Posterior cingulate gyrus (tissue), 11 donors: ENCODE measurements at regions of chr19 and their contacts with region 1.

Region 1: DNA sequence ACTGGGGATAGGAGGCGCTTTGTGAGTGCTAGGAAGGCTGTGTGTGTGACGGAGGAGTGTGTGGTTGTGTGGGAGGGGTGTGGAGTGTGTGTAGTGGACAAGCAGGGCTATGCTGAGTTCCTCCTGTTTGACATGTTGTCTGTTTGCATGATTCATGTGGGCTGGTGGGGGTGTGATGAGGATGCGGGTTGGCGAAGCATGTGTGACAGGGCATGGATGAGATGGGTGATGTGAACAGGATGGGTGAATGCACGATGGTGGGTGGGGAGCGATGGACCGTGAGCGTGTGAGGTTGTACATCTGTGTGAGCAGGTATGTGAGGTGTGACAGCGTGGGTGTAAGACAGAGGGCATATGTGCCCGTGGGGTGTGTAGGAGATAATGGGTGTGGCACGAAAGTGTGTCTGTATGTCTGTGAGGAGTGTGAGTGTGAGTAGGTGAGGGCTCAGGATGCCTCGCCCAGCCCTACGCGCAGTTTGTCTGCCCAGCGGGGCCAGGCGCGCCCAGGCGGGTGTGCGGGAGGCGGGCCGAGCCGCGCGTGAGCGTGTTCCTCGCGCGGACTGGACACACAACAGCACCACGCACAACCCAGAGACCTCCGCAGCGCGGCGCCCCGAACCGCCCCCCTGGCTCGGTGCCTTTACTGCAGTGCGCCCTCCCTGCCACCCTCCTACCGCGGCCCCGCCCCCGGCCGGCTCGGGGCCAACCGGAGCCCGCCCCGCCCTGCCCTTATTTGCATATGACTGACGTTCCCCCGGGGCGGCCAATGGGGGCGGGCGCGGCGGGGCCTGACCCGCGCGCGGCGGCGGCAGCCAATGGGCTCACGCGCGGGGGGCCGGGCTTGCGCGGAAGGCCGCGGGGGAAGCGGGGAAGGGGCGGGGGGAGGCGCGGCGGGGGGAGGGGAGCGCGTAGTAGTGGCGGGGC is 14.4 kb downstream of the CIC start:
- DNase-seq: peak; percentile 87 to 99 (median 96)

Region 2: DNA sequence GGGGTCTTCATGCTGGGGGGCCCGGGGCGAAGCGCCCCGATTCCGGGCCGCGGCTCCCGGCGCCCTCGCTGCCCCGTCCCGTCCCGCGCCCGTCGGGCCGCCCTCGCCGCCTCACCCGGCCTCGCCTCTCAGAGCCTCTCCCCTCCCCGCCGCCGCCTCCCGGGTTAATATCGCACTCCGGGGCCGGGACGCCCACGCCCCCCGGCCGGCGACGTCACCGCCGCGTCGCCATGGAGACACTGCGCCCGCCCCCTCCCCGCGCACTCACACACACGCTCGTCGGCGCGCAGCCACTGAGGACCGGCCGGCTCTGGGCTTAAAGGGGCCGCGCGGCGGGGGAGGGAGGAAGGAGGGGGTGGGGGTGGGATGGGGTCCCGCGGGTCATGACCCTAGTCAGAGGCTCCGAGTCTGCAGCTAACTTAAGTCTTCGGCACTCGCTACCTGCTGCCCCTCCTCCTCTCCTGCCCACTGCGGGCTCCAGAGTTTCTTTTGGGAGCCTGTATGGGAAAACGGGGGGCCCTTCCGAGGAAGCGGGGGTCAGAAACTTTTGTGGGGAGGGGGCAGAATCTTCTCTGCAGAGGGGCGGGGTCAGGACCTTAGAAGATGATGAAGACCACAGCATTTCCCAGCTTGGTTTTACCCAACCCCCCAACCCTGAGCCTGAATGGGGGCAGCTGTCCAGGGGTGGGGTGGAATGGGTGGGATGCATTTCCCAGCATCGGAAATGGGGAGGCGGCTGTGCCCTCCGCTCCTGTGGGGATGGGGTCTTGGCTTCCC is 28.2 kb before region 1 on chr19 and contains the start of gene ERF:
- intact Hi-C with region 1: loop called (anchors 2 kb)
- DNase-seq: peak; percentile 89 to 99 (median 94)

Region 3: DNA sequence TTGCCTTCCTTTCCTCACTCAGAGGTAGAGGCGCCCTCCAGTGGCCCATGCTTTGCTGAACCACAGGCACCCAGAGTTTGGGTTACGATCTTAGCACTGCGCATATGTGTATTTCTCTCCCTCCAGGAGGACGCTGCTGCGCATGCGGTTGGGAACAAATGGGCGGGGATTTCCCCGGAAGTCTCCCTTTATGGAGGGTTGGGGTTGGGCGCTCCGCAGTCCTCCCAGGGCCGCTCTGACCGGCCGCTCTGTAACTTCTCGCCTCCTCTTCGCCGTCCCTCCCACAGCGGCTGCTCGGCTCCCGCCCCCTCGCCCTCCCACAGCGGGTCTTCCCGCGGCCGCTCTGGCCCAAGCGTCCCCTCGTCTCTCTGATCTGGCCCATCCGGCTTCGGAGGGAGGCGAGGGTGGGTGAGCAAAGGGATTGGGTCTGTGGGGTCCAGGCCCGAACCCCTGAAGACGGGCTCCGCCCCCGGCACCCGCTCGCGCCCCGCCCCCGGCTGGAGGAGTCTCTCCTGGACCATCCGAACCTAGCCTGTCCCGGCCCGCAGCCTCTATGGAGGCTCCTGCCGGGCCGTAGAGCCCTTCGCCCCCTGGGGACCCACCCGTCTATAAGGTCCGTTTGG is 42.0 kb after region 1 on chr19 and contains the start of gene MEGF8:
- intact Hi-C with region 1: loop called (anchors 2 kb)
- DNase-seq: peak; percentile 96 to 100 (median 98)